Ascending aorta (tissue), 2 donors: ENCODE measurements at regions of chr3 and their contacts with region 1.

Region 1: GRCh38 chr3:173045770-173046382 is 95.2 kb downstream of the SPATA16 start:
- DNase-seq: no peak
- H3K4me3 ChIP-seq: no peak overlapping the region
- H3K27ac ChIP-seq: no peak overlapping the region
- H3K4me1 ChIP-seq: no peaks in the 10 kb centered on the region
- H3K27me3 ChIP-seq: no peaks in the 10 kb centered on the region
- CTCF ChIP-seq: peak in 2 of 3 experiments; percentile 7 to 36

Region 2: DNA sequence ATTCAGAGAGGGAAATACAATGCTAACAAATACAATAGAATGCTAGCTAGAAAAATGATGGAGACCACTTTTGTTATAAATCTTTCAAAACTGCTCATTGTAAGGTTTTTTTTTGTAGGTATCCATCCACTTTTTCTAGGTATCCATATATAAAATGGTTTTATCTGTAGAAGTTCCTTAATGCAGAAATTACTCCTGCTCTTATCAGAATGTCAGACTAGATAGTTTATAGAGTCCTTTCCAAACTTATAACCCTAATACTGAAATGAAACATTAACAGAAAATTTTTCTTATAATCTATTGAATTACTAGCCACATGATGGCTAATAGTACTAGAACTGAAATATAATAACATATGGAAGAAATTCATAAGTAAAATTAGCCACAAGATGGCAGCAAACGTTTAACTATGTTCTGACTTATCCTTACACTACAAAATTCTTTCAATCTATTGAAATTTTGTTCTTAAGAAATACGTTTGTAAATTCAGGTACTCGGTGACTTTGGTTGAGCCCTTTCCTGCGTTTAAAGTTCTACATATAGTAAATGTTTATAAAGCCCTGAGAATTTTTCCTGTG is 236.8 kb before region 1 on chr3:
- intact Hi-C with region 1: loop called (anchors 10 kb)
- DNase-seq: no peak
- H3K4me3 ChIP-seq: no peak overlapping the region
- H3K27ac ChIP-seq: no peak overlapping the region
- H3K4me1 ChIP-seq: no peaks in the 10 kb centered on the region
- H3K27me3 ChIP-seq: no peaks in the 10 kb centered on the region
- CTCF ChIP-seq: peak in 1 of 3 experiments; percentile 41